Heart left ventricle (tissue), 16 donors: ENCODE measurements at regions of chr3 and their contacts with region 1.

Region 1: GRCh38 chr3:43690400-43691119 is at the start of gene ABHD5:
- DNase-seq: peak; percentile 89 to 96 (median 93)
- ATAC-seq: peak; percentile 95 to 98 (median 97)
- H3K4me3 ChIP-seq: peak within 1 kb of the TSS; percentile 73 to 98 (median 86)
- H3K27ac ChIP-seq: peak within 1 kb of the TSS; percentile 83 to 97 (median 94)
- H3K4me1 ChIP-seq: peaks cover 2 to 38% (median 14%) of the 10 kb centered on the region in 12 donors
- H3K27me3 ChIP-seq: no peaks in the 10 kb centered on the region
- CTCF ChIP-seq: peak in 5 of 12 donors; percentile 2 to 47 (median 30)
- POLR2A ChIP-seq: peak; percentile 81 to 99
- total RNA-seq, gene ABHD5: 24.2 to 48.2 (median 26.7) TPM

Region 2: DNA sequence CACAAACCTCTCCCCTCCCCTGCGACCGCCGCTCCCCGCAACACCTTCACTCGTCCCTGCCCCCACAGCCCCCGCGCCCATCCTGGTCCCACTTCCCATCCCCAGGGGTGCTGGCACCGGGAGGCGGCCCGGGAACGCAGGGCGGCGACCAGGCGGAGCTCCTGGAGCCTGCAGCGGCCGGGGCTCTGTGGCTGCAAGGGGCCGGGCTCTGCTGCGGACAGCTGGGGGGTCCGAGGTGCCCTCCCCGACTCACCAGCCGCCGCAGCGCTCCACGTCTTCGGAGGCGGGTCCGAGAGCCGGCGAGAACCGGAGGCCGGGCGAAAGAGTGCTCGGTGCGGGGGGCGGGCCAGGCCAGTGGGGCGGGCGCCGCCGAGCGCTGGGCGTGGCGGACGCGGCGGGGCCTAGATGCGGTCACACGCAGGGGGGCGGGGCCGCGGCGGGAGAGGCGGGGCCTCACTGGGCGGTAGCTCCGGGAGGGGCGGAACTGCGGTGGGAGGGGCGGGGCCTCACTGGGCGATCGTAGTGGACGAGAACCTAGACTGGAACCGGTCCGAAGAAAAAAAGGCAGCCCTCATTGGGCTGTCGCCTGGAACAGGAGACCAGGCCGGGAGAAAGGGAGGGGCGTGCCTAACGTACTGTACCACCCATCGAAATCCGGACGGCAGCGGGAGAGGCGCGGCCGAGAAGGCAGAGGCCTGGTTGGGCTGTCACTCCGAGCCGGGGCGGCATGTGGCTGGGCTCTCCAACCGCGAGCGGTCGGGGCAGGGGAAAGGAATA is 68.7 kb before region 1 on chr3 and contains the start of gene ANO10:
- intact Hi-C with region 1: loop called in 7 of 10 experiments (anchors 2 to 10 kb)
- DNase-seq: peak; percentile 99
- ATAC-seq: peak; percentile 98 to 99 (median 99)
- H3K4me3 ChIP-seq: peak within 1 kb of the TSS; percentile 77 to 99 (median 90)
- H3K27ac ChIP-seq: peak within 1 kb of the TSS; percentile 20 to 91 (median 82)
- H3K4me1 ChIP-seq: peaks cover 0 to 20% (median 9%) of the 10 kb centered on the region in 12 donors
- H3K27me3 ChIP-seq: no peaks in the 10 kb centered on the region
- CTCF ChIP-seq: no peak
- POLR2A ChIP-seq: peak in 1 of 2 donors; percentile 86
- total RNA-seq, gene ANO10: 8.3 to 29.8 (median 15.8) TPM

Region 3: GRCh38 chr3:43759297-43759782 is 68.8 kb after region 1 on chr3:
- intact Hi-C with region 1: loop called in 1 of 10 experiments (anchors 5 kb)
- DNase-seq: peak in 3 of 5 donors; percentile 38 to 60 (median 42)
- ATAC-seq: peak; percentile 72 to 92 (median 91)
- H3K4me3 ChIP-seq: no peak overlapping the region
- H3K27ac ChIP-seq: peak overlapping the region in 11 of 12 donors; percentile 30 to 78 (median 57)
- H3K4me1 ChIP-seq: peaks cover 0 to 20% (median 14%) of the 10 kb centered on the region in 12 donors
- H3K27me3 ChIP-seq: no peaks in the 10 kb centered on the region
- CTCF ChIP-seq: peak in 2 of 12 donors; percentile 20 to 29
- POLR2A ChIP-seq: peak in 1 of 2 donors; percentile 22

Region 4: GRCh38 chr3:43769471-43770425 is 79.2 kb after region 1 on chr3:
- intact Hi-C with region 1: loop called in 1 of 10 experiments (anchors 2 kb)
- DNase-seq: peak; percentile 94 to 98 (median 97)
- ATAC-seq: peak; percentile 86 to 94 (median 92)
- H3K4me3 ChIP-seq: peak overlapping the region in 10 of 12 donors; percentile 10 to 55 (median 46)
- H3K27ac ChIP-seq: peak overlapping the region; percentile 31 to 90 (median 86)
- H3K4me1 ChIP-seq: peaks cover 0 to 55% (median 30%) of the 10 kb centered on the region in 12 donors
- H3K27me3 ChIP-seq: no peaks in the 10 kb centered on the region
- CTCF ChIP-seq: peak; percentile 90 to 99 (median 95)
- POLR2A ChIP-seq: peak in 1 of 2 donors; percentile 20